ENCODE measurements at regions of chr7 and their contacts with region 1.

Region 1: GRCh38 chr7:87747681-87748080 is 119.5 kb downstream of the RUNDC3B start:
- DNase-seq: no peak
- H3K4me3 ChIP-seq: no peak overlapping the region; a peak in 1 of 8 replicates
- H3K27ac ChIP-seq: no peak overlapping the region; the same call in 1 of the 2 replicates
- H3K4me1 ChIP-seq: peaks cover 0 to 5% (median under 1%) of the 10 kb centered on the region in 4 experiments; a peak in 3 of 7 replicates
- H3K27me3 ChIP-seq: no peaks in the 10 kb centered on the region
- CTCF ChIP-seq: no peak
- EP300 ChIP-seq: no peak
- POLR2A ChIP-seq: no peak
- RAD21 ChIP-seq: no peak

Region 2: GRCh38 chr7:87413951-87414799 is 333.5 kb before region 1 on chr7:
- CTCF ChIA-PET with region 1: no interaction called
- POLR2A ChIA-PET with region 1: no interaction called
- DNase-seq: no peak
- H3K4me3 ChIP-seq: no peak overlapping the region
- H3K27ac ChIP-seq: no peak overlapping the region
- H3K4me1 ChIP-seq: no peaks in the 10 kb centered on the region
- H3K27me3 ChIP-seq: no peaks in the 10 kb centered on the region
- CTCF ChIP-seq: no peak
- EP300 ChIP-seq: no peak
- POLR2A ChIP-seq: no peak
- RAD21 ChIP-seq: no peak

Region 3: DNA sequence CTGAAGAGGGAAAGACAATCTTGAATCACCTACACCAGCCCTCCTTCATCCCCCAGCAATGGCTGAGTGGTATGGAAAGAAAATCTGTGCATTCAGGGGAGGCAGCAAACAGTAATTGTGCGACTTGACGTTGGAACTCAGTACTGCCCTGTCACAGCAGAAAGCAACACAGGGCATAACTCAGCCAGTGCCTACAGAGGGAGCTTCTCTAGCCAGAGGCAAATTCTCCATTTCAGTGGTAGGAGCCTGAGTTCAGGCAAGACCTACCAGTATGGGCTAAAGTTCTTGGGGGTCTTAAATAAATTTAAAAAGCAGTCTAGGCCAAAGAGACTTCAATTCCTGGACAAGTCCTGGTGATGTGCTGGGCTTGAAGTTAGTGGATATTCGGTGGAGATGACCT is 18.4 kb before region 1 on chr7:
- CTCF ChIA-PET with region 1: no interaction called
- POLR2A ChIA-PET with region 1: no interaction called
- DNase-seq: no peak
- H3K4me3 ChIP-seq: no peak overlapping the region
- H3K27ac ChIP-seq: no peak overlapping the region
- H3K4me1 ChIP-seq: no peaks in the 10 kb centered on the region
- H3K27me3 ChIP-seq: no peaks in the 10 kb centered on the region
- CTCF ChIP-seq: no peak
- EP300 ChIP-seq: no peak
- POLR2A ChIP-seq: no peak
- RAD21 ChIP-seq: no peak

Region 4: DNA sequence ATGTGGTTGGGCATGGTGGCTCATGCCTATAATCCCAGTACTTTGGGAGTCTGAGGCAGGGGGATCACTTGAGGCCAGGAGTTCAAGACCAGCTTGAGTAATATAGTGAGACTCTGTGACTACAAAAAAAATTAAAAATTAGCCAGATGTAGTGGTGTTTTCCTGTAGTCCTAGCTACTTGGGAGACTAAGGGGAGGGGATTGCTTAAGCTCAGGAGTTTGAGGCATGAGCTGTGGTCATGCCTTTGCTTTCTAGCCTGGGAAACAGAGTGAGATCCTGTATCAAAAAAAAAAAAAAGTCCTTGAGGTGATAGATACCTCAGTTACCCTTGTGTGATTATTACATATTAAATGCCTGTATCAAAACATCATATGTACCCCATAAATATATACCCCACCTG is 11.8 kb after region 1 on chr7:
- CTCF ChIA-PET with region 1: interaction called, 11 read pairs
- POLR2A ChIA-PET with region 1: interaction called, 3 read pairs
- DNase-seq: no peak
- H3K4me3 ChIP-seq: no peak overlapping the region
- H3K27ac ChIP-seq: no peak overlapping the region
- H3K4me1 ChIP-seq: no peaks in the 10 kb centered on the region
- H3K27me3 ChIP-seq: no peaks in the 10 kb centered on the region
- CTCF ChIP-seq: no peak
- EP300 ChIP-seq: no peak
- POLR2A ChIP-seq: no peak
- RAD21 ChIP-seq: no peak

Measured in H1 (cell line).